Activated B cell treated with CpG ODN at 0.5 μM for 24 hours (primary cell): ENCODE measurements at regions of chr19 and their contacts with region 1.

Region 1: GRCh38 chr19:11587302-11587974 is 9.8 kb upstream of the ZNF627 start:
- DNase-seq: peak; percentile 76
- ATAC-seq: peak; percentile 81
- H3K4me3 Mint-ChIP-seq: no peak overlapping the region
- H3K27ac Mint-ChIP-seq: peak overlapping the region; percentile 30
- H3K4me1 Mint-ChIP-seq: peaks cover 54% of the 10 kb centered on the region
- H3K27me3 Mint-ChIP-seq: no peaks in the 10 kb centered on the region
- CTCF ChIP-seq: no peak

Region 2: DNA sequence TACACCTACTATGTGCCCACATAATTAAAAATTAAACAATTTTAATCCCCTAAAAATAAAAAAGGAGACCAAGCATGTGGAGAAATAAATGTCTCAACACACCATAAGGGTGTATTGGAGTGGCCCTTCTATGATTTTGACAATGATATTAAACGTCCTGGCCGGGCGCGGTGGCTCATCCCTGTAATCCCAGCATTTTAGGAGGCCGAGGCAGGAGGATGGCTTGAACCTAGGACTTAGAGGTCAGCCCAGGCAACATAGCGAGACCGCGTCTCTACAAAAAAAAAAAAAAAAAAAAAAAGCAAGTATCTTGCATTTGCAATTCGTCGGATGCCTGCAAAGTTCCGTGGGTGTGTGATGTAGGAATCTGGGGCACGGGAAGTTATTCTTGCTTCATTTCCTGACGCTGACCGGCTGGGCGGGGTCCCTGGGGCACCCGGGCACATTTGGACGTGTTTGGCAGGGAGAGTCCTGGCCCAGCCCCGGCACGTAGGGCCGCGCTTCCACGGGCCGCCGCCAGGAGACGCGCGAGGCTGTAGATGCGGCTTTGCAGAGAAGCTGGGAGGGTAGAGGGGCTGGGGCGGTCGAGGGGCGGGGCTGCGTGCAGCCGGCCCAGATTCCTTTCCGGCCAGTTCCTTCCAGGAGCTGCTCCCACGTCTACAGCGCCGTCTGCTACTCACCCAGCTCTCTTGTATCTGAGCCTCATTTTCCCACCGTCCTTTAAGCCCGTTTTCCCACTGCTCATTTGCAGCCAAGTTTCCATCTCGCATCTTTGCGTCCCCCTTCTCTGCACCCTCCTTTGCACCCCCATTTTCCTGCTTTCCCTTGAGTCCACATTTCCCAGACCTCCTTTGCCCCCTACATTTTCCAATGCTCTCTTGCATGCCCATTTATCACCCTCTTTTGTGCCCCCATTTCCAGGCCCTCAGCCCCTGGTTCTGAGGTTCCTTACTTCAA is 293.7 kb before region 1 on chr19:
- CTCF ChIA-PET with region 1: no interaction called
- POLR2A ChIA-PET with region 1: interaction called, 3 read pairs
- intact Hi-C with region 1: loop called (anchors 10 kb)
- DNase-seq: peak; percentile 84
- ATAC-seq: peak; percentile 100
- H3K4me3 Mint-ChIP-seq: no peak overlapping the region
- H3K27ac Mint-ChIP-seq: no peak overlapping the region
- H3K4me1 Mint-ChIP-seq: peaks cover 6% of the 10 kb centered on the region
- H3K27me3 Mint-ChIP-seq: peaks cover 5% of the 10 kb centered on the region
- CTCF ChIP-seq: peak; percentile 80

Region 3: DNA sequence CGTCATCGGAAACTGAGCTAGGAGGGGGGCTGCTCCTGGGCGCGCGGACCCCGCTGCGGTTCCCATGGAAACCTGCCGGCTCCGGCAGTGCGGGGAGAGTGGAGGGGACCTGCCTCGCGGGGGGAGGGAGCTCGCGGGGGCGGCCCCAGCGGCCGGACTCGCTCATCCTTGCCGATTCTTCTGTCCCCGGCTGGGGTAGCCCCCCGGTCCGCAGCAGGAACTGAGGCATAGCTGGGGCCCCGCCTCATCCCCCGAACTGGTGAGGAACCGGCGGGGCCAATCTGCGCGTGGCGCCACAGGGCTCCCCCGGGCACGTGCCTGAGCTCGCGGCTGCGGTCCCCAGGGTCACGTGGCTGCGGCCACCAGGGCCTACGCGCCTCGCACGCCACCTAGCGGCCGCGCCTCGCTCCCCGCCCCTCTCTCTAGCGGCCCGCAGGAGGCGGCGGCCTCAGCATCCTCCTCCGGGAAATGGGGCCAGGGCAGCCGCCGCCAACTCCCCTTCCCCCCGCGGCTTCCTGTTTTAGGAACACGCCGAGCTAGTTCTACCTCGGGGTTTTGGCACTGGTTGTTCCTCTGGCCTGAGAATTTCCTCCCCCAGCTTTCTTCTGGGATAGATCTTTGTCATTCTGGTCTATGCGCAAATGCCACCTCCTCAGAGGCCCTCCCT is 104.9 kb before region 1 on chr19:
- CTCF ChIA-PET with region 1: interaction called, 4 read pairs
- POLR2A ChIA-PET with region 1: interaction called, 3 read pairs
- intact Hi-C with region 1: loop called (anchors 1 kb)
- DNase-seq: peak; percentile 85
- ATAC-seq: peak; percentile 72
- H3K4me3 Mint-ChIP-seq: peak overlapping the region; percentile 74
- H3K27ac Mint-ChIP-seq: peak overlapping the region; percentile 41
- H3K4me1 Mint-ChIP-seq: peaks cover 30% of the 10 kb centered on the region
- H3K27me3 Mint-ChIP-seq: peaks cover 23% of the 10 kb centered on the region
- CTCF ChIP-seq: no peak

Region 4: GRCh38 chr19:11505032-11505503 is 82.4 kb before region 1 on chr19:
- CTCF ChIA-PET with region 1: no interaction called
- POLR2A ChIA-PET with region 1: interaction called, 10 read pairs
- intact Hi-C with region 1: loop called (anchors 2 kb)
- DNase-seq: peak; percentile 97
- ATAC-seq: peak; percentile 93
- H3K4me3 Mint-ChIP-seq: peak overlapping the region; percentile 92
- H3K27ac Mint-ChIP-seq: peak overlapping the region; percentile 95
- H3K4me1 Mint-ChIP-seq: peaks cover 18% of the 10 kb centered on the region
- H3K27me3 Mint-ChIP-seq: no peaks in the 10 kb centered on the region
- CTCF ChIP-seq: no peak

Region 5: DNA sequence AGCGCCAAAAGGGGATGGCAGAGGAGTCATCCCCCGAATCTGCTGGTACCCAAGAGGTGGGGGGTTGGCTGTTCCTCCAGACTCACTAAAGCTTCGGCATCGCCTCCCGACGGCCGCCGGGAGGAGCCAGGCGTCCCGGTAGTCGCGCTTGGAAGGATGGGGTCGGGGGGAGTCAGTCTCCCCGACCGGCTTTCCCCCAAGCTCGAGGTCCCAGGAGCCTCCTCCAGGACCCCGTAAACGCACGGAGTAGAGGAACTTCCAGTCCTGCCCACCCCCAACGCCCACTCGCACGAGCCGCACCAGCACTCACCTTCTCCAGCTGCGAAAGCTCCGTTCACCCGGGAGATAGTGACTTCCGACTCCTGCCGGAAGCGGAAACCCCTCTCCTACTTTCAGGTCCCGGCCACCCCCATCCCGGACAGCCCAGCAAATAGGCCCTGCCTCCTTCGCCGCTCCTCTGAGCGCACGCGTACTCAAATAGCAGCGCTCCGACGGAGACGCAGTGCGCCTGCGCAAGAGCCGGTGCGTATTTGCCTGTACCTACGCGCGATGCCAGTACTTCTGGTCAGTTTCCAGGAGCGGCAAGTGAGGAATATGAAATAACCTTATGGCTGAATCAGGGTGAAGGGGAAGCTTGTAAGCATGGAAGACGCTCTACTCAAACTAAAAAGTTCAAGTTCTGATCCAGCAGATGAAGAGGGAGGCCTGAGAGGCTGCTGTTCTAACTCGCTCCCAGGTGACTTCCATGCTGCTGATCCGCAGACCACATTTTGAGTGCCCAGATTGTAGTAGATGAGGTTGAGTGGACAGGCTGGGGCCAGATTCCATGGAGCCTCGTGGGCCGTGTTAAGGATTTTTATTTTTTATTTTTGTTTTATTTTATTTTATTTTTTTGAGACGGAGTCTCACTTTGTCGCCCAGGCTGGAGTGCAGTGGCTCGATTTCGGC is 28.3 kb before region 1 on chr19 and contains the start of gene ELOF1:
- CTCF ChIA-PET with region 1: interaction called, 70 read pairs
- POLR2A ChIA-PET with region 1: interaction called, 81 read pairs
- intact Hi-C with region 1: loop called (anchors 1 kb)
- DNase-seq: peak; percentile 88
- ATAC-seq: peak; percentile 86
- H3K4me3 Mint-ChIP-seq: peak within 1 kb of the TSS; percentile 98
- H3K27ac Mint-ChIP-seq: peak within 1 kb of the TSS; percentile 93
- H3K4me1 Mint-ChIP-seq: peaks cover 72% of the 10 kb centered on the region
- H3K27me3 Mint-ChIP-seq: no peaks in the 10 kb centered on the region
- CTCF ChIP-seq: no peak
- total RNA-seq, gene ELOF1: 61.7 and 66.1 TPM in 2 replicates

Region 6: DNA sequence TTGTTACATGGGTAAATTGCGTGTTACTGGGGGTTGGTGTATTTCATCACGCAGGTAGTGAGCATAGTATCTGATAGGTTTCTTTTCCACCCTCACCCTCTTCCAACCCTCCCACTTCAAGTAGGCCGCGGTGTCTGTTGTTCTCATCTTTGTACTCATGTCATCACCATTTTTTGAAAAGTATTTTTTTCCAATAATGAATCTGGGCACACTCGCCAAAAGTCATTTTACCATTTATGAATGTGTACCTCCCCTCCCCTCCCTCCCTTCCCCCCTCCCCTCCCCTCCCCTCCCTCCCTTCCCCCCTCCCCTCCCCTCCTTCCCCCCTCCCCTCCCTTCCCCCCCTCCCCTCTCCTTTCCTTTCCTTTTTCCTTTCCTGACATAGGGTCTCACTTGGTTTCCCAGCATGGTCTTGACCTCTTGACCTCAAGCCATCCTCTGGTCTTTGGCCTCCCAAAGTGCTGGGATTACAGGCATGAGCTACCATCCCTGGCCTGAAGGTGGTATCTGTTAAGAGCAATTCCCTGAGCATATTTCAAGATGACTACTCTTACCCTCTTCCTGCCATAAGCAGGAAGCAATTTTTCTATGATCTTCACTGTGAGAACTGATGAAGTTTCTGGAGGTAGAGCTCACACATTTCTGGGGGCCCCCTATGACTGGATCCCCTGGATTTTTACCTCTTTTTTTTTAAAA is 25.5 kb after region 1 on chr19:
- CTCF ChIA-PET with region 1: no interaction called
- POLR2A ChIA-PET with region 1: interaction called, 10 read pairs
- intact Hi-C with region 1: no loop called
- DNase-seq: no peak
- ATAC-seq: no peak
- H3K4me3 Mint-ChIP-seq: no peak overlapping the region
- H3K27ac Mint-ChIP-seq: no peak overlapping the region
- H3K4me1 Mint-ChIP-seq: peaks cover 2% of the 10 kb centered on the region
- H3K27me3 Mint-ChIP-seq: no peaks in the 10 kb centered on the region
- CTCF ChIP-seq: no peak